ENCODE measurements at regions of chr3 and their contacts with region 1.

Region 1: DNA sequence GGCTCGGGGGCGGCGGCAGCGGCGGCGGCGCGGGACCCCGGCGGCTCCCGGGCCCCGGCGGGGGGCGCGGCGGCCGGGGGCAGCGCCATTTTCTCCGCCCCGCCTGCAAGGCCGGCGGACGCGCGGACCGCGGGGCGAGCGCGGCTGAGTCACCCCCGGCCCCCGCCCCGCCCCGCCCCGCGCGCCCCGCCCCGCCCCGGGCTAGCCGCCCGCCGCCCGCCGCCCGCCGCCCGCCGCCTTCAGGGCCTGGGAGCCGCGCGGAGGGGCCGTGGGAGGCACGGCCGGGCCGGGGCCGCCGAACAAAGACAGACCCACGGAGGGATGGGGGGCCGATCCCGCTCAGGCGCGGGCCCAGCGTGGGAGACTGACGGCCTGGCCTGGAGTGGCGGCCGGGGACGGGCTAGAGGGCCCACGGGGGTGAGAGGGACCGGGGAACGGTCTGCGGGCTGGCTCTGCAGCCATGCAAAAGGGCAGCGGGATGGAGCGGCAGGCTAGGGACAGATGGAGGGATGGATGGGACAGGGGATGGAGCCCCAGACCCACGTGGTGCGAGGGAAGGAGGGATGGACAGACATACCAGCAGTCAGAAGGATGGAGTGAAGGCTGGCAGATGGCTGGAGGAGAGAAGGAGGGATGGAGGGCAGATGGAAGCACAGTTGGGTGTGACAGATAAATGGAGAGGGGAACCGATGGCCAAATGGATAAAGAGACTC is at the start of gene EIF4E3:
- DNase-seq: peak; percentile 40
- H3K4me3 Mint-ChIP-seq: peak within 1 kb of the TSS; percentile 98
- H3K27ac Mint-ChIP-seq: peak within 1 kb of the TSS; percentile 96
- H3K4me1 Mint-ChIP-seq: peaks cover 66% of the 10 kb centered on the region
- H3K27me3 Mint-ChIP-seq: no peaks in the 10 kb centered on the region
- total RNA-seq, gene EIF4E3: 36.7 to 37.6 TPM

Region 2: GRCh38 chr3:71466483-71466882 is 259.0 kb before region 1 on chr3:
- CTCF ChIA-PET with region 1: no interaction called
- POLR2A ChIA-PET with region 1: no interaction called
- intact Hi-C with region 1: no loop called
- DNase-seq: no peak
- H3K4me3 Mint-ChIP-seq: no peak overlapping the region
- H3K27ac Mint-ChIP-seq: no peak overlapping the region
- H3K4me1 Mint-ChIP-seq: peaks cover 47% of the 10 kb centered on the region
- H3K27me3 Mint-ChIP-seq: no peaks in the 10 kb centered on the region

Region 3: DNA sequence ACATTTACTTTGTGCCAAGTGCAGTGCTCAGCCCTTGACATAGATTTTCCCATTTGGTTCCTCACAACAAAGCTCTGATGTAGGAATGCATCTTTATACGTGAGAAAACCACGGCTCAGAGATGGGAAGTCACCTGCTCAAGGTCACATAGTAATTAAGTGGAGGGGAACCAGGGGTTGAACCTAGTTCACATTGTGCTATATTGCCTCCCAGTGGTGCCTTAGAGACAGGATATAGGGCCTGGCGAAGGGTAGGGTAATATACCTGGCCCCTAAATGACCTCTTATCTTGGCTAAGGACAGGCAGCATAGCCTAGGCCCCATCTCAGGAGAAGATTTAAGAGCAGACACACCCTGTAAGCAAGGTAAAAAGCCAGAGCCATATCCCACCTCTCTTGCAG is 213.4 kb before region 1 on chr3:
- CTCF ChIA-PET with region 1: no interaction called
- POLR2A ChIA-PET with region 1: no interaction called
- intact Hi-C with region 1: no loop called
- DNase-seq: peak; percentile 46
- H3K4me3 Mint-ChIP-seq: no peak overlapping the region
- H3K27ac Mint-ChIP-seq: no peak overlapping the region
- H3K4me1 Mint-ChIP-seq: peaks cover 6% of the 10 kb centered on the region
- H3K27me3 Mint-ChIP-seq: no peaks in the 10 kb centered on the region

Region 4: GRCh38 chr3:71583566-71584449 is 141.6 kb before region 1 on chr3 and contains the start of gene FOXP1:
- CTCF ChIA-PET with region 1: no interaction called
- POLR2A ChIA-PET with region 1: no interaction called
- intact Hi-C with region 1: loop called (anchors 5 kb)
- DNase-seq: peak; percentile 75
- H3K4me3 Mint-ChIP-seq: peak within 1 kb of the TSS; percentile 88
- H3K27ac Mint-ChIP-seq: peak within 1 kb of the TSS; percentile 91
- H3K4me1 Mint-ChIP-seq: peaks cover 56% of the 10 kb centered on the region
- H3K27me3 Mint-ChIP-seq: peaks cover 1% of the 10 kb centered on the region
- total RNA-seq, gene FOXP1: 94.4 to 102 TPM

Region 5: DNA sequence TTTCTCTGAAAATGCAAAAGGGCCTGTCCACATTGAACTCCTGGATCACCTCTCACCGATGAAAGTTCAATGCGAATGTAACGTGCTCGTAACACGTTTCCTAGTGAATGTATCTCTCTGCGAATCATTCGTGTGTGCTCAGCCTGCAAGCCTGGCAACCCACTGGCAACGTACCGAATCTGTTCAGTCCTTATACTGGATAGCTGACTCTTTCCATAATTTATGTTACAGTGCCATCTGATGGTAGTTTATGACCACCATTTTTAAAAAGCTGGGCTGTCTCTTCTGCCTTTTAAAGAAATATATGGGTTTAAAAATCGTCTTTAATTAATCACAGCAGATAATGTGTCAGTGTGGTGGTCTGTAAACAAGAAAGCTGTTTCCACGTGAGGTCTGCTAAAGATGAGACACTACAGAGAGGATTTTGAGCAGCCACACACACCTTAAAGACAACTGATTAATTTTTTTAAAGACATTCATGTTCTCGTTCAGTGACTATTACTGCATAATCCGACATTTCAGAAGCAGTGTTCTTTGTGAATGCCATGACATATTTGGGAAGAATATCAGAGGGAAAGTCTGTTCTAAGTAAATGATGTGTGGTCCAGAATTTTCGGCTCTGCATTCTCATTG is 72.5 kb before region 1 on chr3:
- CTCF ChIA-PET with region 1: no interaction called
- POLR2A ChIA-PET with region 1: no interaction called
- intact Hi-C with region 1: no loop called
- DNase-seq: peak; percentile 50
- H3K4me3 Mint-ChIP-seq: peak overlapping the region; percentile 16
- H3K27ac Mint-ChIP-seq: no peak overlapping the region
- H3K4me1 Mint-ChIP-seq: peaks cover 6% of the 10 kb centered on the region
- H3K27me3 Mint-ChIP-seq: no peaks in the 10 kb centered on the region

Region 6: DNA sequence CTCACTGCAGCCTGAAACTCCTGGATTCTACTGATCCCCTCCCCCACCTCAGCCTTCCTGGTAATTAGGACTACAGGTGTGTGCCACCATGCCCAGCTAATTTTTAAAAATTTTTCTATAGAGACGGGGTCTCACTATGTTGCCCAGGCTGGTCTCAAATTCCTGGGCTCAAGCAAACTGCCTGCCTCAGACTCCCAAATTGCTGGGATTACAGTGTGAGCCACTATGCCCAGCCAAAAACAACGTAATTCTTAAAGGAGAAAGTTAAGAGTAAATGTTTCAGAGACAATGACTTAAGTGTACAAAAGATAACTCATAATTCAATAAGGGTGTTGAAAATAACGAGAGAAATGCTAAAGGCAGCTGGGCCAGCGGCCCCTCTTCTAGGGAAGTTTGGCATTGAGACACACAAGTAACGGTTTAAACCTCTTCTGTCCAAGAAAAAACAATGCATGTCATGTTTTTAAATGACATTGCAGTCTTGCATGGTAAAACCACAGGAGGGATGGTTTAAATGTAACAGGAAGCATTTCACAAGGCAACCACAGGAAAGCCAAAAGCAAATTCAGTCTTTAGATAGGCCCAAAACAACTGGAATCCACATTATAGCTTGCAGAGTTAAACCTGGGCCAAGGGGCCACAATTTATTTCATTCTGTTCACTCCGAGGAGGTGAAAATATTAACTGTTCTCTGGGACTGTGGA is 54.4 kb after region 1 on chr3:
- CTCF ChIA-PET with region 1: interaction called, 22 read pairs
- POLR2A ChIA-PET with region 1: no interaction called
- intact Hi-C with region 1: no loop called
- DNase-seq: no peak
- H3K4me3 Mint-ChIP-seq: peak overlapping the region; percentile 12
- H3K27ac Mint-ChIP-seq: no peak overlapping the region
- H3K4me1 Mint-ChIP-seq: peaks cover 15% of the 10 kb centered on the region
- H3K27me3 Mint-ChIP-seq: peaks cover 50% of the 10 kb centered on the region

Region 7: DNA sequence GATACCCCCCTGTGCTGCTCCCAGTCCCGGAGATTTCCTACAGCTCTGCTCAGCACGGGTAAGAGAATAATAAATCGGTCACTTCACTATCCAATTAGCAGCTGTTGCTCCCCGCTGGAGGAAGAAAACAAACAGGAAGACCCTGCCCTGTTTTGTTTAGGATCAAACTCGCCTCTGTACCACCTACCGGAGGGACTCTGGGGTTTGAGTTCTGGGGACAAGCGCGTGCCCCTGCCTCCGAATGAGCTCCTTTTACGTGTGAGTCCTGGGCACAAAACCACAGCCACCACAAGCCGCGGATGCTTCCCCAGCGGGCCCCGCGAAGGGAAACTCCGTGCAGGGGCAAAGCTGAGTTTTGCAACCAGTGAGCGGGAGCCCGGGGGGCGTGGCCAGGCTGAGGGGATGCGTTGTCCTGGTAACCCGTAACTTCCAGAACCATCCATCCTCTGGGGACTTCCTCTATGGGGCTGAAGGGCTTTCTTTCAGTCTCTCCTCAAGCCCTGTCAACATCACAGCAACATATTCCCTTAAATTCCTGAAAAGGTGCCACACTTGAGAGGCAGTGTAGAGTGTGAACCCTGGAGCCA is 375.3 kb after region 1 on chr3:
- CTCF ChIA-PET with region 1: no interaction called
- POLR2A ChIA-PET with region 1: no interaction called
- intact Hi-C with region 1: loop called (anchors 10 kb)
- DNase-seq: peak; percentile 97
- H3K4me3 Mint-ChIP-seq: peak overlapping the region; percentile 78
- H3K27ac Mint-ChIP-seq: peak overlapping the region; percentile 70
- H3K4me1 Mint-ChIP-seq: peaks cover 22% of the 10 kb centered on the region
- H3K27me3 Mint-ChIP-seq: peaks cover 3% of the 10 kb centered on the region

Region 8: GRCh38 chr3:72482589-72483321 is 757.3 kb after region 1 on chr3:
- CTCF ChIA-PET with region 1: no interaction called
- POLR2A ChIA-PET with region 1: no interaction called
- intact Hi-C with region 1: loop called (anchors 5 kb)
- DNase-seq: peak; percentile 95
- H3K4me3 Mint-ChIP-seq: peak overlapping the region; percentile 42
- H3K27ac Mint-ChIP-seq: peak overlapping the region; percentile 91
- H3K4me1 Mint-ChIP-seq: peaks cover 79% of the 10 kb centered on the region
- H3K27me3 Mint-ChIP-seq: no peaks in the 10 kb centered on the region

Region 9: GRCh38 chr3:73086071-73086494 is 1360.6 kb after region 1 on chr3:
- CTCF ChIA-PET with region 1: no interaction called
- POLR2A ChIA-PET with region 1: no interaction called
- intact Hi-C with region 1: loop called (anchors 10 kb)
- DNase-seq: peak; percentile 62
- H3K4me3 Mint-ChIP-seq: no peak overlapping the region
- H3K27ac Mint-ChIP-seq: no peak overlapping the region
- H3K4me1 Mint-ChIP-seq: peaks cover 11% of the 10 kb centered on the region
- H3K27me3 Mint-ChIP-seq: no peaks in the 10 kb centered on the region